AG04450 (cell line): ENCODE measurements at regions of chr6 and their contacts with region 1.

Region 1: DNA sequence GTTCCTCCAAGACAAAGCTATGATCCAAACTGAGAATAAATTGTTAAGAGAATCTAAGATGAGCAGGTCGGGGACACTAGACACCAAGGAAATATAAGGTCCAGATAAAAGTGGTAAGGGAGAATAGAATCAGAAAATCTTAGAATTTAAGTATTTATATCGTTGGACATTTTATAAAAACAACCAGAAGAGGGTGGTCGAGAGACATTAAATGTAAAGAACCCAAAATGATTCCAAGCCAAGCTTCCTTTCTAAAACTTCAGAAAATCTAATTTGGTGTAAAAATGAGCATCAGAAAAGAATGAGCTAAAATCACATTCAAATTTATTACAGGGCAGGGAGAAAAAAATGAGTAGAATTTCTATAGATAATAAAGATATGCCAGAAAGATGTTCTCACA is 97.8 kb upstream of the OGFRL1 start:
- DNase-seq: no peak
- H3K4me3 ChIP-seq: no peak overlapping the region
- H3K27ac ChIP-seq: no peak overlapping the region
- H3K27me3 ChIP-seq: no peaks in the 10 kb centered on the region
- CTCF ChIP-seq: peak; percentile 34; the same call in 1 of the 2 replicates

Region 2: DNA sequence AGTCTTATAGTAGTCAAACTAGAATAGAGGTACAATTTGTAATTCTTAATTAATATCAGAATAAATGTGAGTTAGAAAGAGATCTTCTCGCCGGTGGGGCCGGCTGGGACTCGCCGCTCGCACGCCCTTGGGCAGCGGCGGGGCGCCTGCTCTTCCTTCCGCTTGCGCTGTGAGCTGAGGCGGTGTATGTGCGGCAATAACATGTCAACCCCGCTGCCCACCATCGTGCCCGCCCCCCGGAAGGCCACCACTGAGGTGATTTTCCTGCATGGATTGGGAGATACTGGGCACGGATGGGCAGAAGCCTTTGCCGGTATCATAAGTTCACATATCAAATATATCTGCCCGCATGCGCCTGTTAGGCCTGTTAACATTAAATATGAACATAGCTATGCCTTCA is 25.9 kb before region 1 on chr6:
- CTCF ChIA-PET with region 1: no interaction called
- POLR2A ChIA-PET with region 1: no interaction called
- DNase-seq: no peak
- H3K4me3 ChIP-seq: no peak overlapping the region
- H3K27ac ChIP-seq: no peak overlapping the region
- H3K27me3 ChIP-seq: no peaks in the 10 kb centered on the region
- CTCF ChIP-seq: no peak

Region 3: DNA sequence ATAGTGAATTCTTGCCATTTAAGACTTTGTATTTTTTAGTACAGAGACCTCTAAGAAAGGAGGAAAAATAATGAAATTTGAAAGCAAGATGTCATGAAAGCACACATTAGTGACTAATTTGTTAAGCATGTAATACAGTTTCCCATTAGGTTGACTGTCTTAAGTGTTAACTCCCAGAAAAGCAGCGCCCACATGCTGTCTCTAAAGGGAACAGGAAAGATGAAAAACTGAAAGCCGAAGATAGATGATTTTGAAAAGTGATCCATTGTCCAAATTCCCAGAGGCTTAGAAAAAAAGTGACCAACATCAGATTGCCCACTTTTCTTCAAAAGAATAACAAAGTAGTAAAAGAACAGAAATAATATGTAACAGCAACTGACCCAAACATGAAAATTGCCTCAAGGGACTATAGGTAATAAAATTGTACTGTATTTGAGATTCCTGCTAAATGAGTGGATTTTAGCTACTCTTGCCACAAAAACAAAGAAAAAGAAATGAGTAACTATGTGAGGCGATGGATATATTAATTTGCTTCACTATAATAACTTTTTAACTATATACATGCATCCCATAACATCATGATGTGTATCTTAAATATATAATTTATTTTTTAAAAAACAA is 14.6 kb after region 1 on chr6:
- CTCF ChIA-PET with region 1: interaction called, 11 read pairs
- POLR2A ChIA-PET with region 1: no interaction called
- DNase-seq: no peak
- H3K4me3 ChIP-seq: no peak overlapping the region
- H3K27ac ChIP-seq: no peak overlapping the region
- H3K27me3 ChIP-seq: no peaks in the 10 kb centered on the region
- CTCF ChIP-seq: no peak

Region 4: DNA sequence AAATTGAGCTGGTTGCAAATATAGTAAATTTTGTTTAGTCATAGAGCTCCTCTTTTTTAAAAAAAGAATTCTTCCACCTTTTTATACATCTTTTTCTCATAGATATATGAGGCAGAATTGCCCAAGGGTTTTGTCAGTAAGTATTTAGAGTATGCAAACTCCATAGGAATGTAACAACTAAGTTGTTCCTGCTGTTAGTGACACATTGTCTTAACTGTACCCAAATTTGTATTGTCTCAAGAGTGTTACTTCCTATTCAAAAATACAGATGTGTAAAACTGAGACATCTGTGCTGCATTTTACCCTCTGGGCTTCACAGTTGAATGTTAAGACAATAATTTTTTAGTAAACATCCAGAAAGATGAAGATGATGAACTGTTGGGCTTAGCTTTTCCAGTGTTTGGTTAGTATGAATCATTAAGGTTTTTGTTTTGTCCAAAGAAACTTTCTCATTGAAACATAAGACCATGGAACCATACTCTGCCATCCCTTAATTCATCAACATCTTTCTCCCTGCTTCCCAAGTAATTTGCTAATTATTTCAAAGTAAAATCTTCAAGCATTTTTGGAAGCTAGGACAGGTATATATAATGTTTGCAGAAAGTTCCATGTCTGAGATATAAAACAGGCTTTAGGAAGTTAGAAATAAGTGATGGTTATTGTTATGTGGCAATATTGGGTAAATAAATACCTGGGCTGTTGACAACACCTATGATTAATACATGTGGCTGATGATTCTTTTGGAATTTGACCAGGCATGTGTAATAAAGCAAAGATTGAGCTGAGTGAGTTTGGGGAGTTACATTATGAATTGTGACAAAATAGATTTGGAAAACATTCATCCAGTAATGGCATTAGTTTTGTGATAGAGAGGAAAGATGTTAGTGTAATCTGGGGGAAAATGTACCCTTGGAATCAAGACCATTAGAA is 109.0 kb after region 1 on chr6:
- CTCF ChIA-PET with region 1: interaction called, 13 read pairs
- POLR2A ChIA-PET with region 1: no interaction called
- DNase-seq: no peak
- H3K4me3 ChIP-seq: no peak overlapping the region
- H3K27ac ChIP-seq: no peak overlapping the region
- H3K27me3 ChIP-seq: no peaks in the 10 kb centered on the region
- CTCF ChIP-seq: no peak

Region 5: DNA sequence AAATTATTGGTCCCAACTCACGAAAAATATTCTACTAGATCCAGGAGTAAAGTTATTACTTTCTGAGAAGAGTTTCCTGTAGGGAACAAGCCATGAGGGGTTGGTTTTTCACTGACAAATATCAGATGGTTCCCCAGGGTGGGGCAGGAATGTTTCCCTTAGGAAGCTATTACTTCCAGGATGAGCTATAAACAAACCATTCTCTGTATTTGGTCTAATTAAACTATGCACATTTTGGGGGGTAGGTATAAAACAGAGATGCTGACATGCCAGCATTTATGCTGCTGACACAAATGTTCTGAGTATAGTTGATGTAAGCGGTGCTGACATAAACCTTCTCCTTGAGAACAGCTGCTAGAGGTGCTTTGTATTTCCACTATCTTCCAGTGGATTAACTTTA is 152.0 kb after region 1 on chr6:
- CTCF ChIA-PET with region 1: interaction called, 31 read pairs
- POLR2A ChIA-PET with region 1: no interaction called
- DNase-seq: no peak
- H3K4me3 ChIP-seq: no peak overlapping the region
- H3K27ac ChIP-seq: no peak overlapping the region
- H3K27me3 ChIP-seq: no peaks in the 10 kb centered on the region
- CTCF ChIP-seq: no peak

Region 6: GRCh38 chr6:71367756-71368155 is 176.9 kb after region 1 on chr6:
- CTCF ChIA-PET with region 1: interaction called, 18 read pairs
- POLR2A ChIA-PET with region 1: no interaction called
- DNase-seq: no peak
- H3K4me3 ChIP-seq: no peak overlapping the region
- H3K27ac ChIP-seq: peak overlapping the region; percentile 25
- H3K27me3 ChIP-seq: no peaks in the 10 kb centered on the region
- CTCF ChIP-seq: no peak

Region 7: GRCh38 chr6:71383901-71384489 is 193.2 kb after region 1 on chr6:
- CTCF ChIA-PET with region 1: interaction called, 17 read pairs
- POLR2A ChIA-PET with region 1: no interaction called
- DNase-seq: no peak
- H3K4me3 ChIP-seq: no peak overlapping the region
- H3K27ac ChIP-seq: no peak overlapping the region
- H3K27me3 ChIP-seq: no peaks in the 10 kb centered on the region
- CTCF ChIP-seq: peak; percentile 67